HCT116 (cell line): ENCODE measurements at regions of chr6 and their contacts with region 1.

Region 1: DNA sequence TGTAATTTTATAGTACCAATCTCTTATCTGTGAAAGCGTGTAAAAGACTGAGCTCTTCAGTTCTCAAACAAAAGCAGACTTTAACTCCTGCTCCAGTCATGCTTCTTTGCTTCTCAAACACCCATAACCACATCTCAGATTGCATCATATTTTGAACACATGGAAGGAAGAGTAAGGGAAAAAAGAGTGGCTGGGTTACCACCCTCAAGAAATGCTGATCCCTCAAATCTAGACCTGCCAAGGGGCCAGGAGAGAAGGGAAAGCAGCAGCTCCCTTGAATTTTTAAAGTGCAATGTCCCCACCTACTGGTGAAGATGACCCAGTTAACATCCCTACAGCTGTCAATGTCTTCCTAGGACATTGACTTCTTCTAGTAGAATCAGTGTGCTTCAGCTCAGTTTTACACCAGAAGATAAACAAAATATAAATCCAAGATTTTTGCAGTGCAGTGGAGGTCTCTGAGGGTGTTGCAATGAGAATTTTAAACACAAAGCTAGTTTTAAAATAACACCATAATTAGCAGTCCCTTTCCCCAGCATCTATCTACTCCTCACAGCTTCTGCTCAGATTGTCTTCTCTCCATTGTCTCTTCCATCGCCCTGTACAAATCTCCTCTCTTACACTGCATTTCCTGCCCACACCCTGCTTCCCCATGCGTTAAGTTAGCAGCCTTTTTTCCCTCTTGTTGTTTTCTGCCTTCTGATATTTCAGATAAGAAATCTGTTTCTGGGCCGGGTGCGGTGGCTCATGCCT is 22.6 kb upstream of the HLA-DQB2 start:
- DNase-seq: peak; percentile 64
- ATAC-seq: peak; percentile 99
- H3K4me3 ChIP-seq: no peak overlapping the region
- H3K27ac ChIP-seq: no peak overlapping the region
- H3K4me1 ChIP-seq: peaks cover 0 to 8% of the 10 kb centered on the region in 2 experiments; a peak in 2 of 4 replicates
- H3K27me3 ChIP-seq: no peaks in the 10 kb centered on the region
- CTCF ChIP-seq: peak; percentile 65 to 72 (median 69)
- POLR2A ChIP-seq: no peak
- RAD21 ChIP-seq: peak; percentile 87

Region 2: DNA sequence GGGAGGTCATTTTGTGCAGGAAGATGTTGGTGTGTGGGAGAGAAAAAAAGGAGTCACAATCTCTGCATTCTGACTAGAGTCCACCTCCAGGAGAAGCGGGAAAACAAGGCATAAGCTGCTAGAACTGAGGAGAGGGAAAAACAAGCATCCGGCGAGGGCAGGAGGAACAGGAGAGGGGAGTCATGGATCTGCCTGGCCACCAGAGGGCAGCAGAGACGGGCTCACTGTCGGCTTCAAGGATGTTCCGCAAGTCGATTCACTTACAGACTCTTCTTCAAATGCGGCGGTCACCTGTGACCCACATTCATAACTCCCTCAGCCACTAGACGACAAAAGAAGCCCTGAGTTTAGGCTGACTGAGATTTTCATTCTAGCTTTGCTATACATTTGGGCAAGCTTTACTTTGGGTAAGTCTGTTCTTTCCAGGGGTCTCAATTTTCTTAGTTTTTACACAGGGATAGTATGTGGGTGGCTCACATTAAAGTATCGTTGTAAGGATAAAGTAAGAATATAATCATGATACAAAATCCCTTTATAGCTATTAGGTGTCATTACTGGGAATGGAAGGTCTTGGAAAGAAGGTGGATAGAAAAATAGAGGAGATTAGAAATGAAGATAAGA is 372.4 kb before region 1 on chr6:
- CTCF ChIA-PET with region 1: interaction called, 33 read pairs
- POLR2A ChIA-PET with region 1: no interaction called
- RAD21 ChIA-PET with region 1: interaction called in 1 of 2 experiments, 4 read pairs
- intact Hi-C with region 1: loop called (anchors 1 kb)
- DNase-seq: peak; percentile 69
- ATAC-seq: peak; percentile 85
- H3K4me3 ChIP-seq: no peak overlapping the region; a peak in 1 of 4 replicates
- H3K27ac ChIP-seq: no peak overlapping the region
- H3K4me1 ChIP-seq: peaks cover 0 to 12% of the 10 kb centered on the region in 2 experiments; a peak in 2 of 4 replicates
- H3K27me3 ChIP-seq: no peaks in the 10 kb centered on the region
- CTCF ChIP-seq: peak; percentile 73 to 91 (median 88)
- POLR2A ChIP-seq: no peak
- RAD21 ChIP-seq: peak; percentile 89

Region 3: DNA sequence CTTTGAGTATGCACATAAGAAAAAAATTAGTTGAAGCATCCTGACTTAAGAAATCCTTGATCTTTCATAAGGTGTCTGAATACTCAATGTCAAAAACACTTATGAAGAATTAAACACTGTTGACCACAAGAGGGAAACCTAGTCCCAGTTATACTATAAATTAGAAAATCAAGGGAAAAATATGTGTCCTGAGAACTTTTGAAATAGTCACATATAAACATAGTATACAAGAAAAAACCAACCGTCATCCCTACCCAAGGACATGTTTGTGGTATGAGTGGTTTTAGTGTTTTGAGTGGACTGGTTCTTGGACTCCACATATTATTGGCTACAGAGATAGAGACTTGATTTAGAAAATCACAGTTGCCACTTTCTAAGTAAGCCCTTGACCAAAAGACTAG is 353.9 kb before region 1 on chr6:
- CTCF ChIA-PET with region 1: interaction called, 12 read pairs
- POLR2A ChIA-PET with region 1: no interaction called
- RAD21 ChIA-PET with region 1: no interaction called
- intact Hi-C with region 1: loop called (anchors 1 kb)
- DNase-seq: peak; percentile 40
- ATAC-seq: no peak
- H3K4me3 ChIP-seq: no peak overlapping the region
- H3K27ac ChIP-seq: no peak overlapping the region
- H3K4me1 ChIP-seq: no peaks in the 10 kb centered on the region
- H3K27me3 ChIP-seq: no peaks in the 10 kb centered on the region
- CTCF ChIP-seq: peak; percentile 13 to 79 (median 55); a peak in 5 of 6 replicates
- POLR2A ChIP-seq: no peak
- RAD21 ChIP-seq: peak; percentile 83

Region 4: DNA sequence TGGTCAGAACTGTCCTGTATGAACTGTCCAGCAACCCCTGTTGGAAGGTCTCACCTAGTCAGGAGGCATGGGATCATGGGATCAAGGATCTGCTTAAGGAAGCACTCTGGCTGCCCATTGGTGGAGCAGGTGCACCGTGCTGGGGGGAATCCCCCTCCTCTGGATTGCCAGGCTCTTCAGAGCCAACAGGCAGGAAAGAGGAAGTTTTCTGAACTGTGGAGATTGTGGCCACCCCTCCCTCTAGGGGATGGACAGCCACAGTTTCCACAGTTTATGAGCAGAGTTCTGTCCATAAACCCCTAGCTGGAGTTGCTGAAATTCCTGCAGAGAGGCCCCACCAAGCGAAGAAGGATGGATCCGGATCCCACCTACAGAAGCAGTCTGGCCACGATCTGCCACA is 106.5 kb before region 1 on chr6:
- CTCF ChIA-PET with region 1: no interaction called
- POLR2A ChIA-PET with region 1: no interaction called
- RAD21 ChIA-PET with region 1: no interaction called
- intact Hi-C with region 1: no loop called
- DNase-seq: no peak
- ATAC-seq: no peak
- H3K4me3 ChIP-seq: no peak overlapping the region
- H3K27ac ChIP-seq: no peak overlapping the region
- H3K4me1 ChIP-seq: no peaks in the 10 kb centered on the region
- H3K27me3 ChIP-seq: no peaks in the 10 kb centered on the region
- CTCF ChIP-seq: no peak
- POLR2A ChIP-seq: no peak
- RAD21 ChIP-seq: no peak

Region 5: DNA sequence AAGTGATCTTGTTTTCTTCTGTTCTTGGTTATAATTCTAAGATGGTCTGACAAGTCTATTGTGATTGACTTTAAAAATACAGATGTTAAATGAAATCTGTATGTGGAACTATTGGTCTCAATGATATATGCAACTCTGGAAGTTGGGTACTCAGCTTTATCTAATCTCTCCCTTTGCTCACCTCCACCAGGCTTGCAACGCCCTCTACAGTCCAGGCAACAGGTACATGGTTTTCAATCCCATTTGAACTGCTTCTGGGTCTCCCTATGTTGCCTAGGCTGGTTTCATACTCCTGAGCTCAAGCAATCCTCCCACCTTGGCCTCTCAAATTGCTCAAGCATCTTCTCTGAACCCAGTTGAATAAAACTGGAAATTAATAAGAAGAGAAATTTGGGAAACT is 93.9 kb before region 1 on chr6:
- CTCF ChIA-PET with region 1: interaction called, 19 read pairs
- POLR2A ChIA-PET with region 1: no interaction called
- RAD21 ChIA-PET with region 1: interaction called, 3 read pairs
- intact Hi-C with region 1: no loop called
- DNase-seq: peak; percentile 42
- ATAC-seq: peak; percentile 91
- H3K4me3 ChIP-seq: no peak overlapping the region
- H3K27ac ChIP-seq: no peak overlapping the region
- H3K4me1 ChIP-seq: no peaks in the 10 kb centered on the region
- H3K27me3 ChIP-seq: no peaks in the 10 kb centered on the region
- CTCF ChIP-seq: peak; percentile 65 to 80 (median 66); a peak in 5 of 6 replicates
- POLR2A ChIP-seq: no peak
- RAD21 ChIP-seq: peak; percentile 87

Region 6: GRCh38 chr6:32816746-32817204 is 30.8 kb after region 1 on chr6 and contains the start of gene HLA-DOB:
- CTCF ChIA-PET with region 1: no interaction called
- POLR2A ChIA-PET with region 1: no interaction called
- RAD21 ChIA-PET with region 1: no interaction called
- intact Hi-C with region 1: no loop called
- DNase-seq: peak; percentile 40
- ATAC-seq: peak; percentile 80
- H3K4me3 ChIP-seq: no peak within 1 kb of the TSS
- H3K27ac ChIP-seq: no peak within 1 kb of the TSS
- H3K4me1 ChIP-seq: peaks cover 0 to 25% of the 10 kb centered on the region in 2 experiments; a peak in 2 of 4 replicates
- H3K27me3 ChIP-seq: no peaks in the 10 kb centered on the region
- CTCF ChIP-seq: no peak
- POLR2A ChIP-seq: no peak
- RAD21 ChIP-seq: no peak
- total RNA-seq, gene HLA-DOB: 0.64 TPM

Region 7: GRCh38 chr6:33029328-33030184 is 243.6 kb after region 1 on chr6:
- CTCF ChIA-PET with region 1: no interaction called
- POLR2A ChIA-PET with region 1: no interaction called
- RAD21 ChIA-PET with region 1: no interaction called
- intact Hi-C with region 1: no loop called
- DNase-seq: no peak
- ATAC-seq: peak; percentile 32; the same call in 1 of the 2 replicates
- H3K4me3 ChIP-seq: no peak overlapping the region
- H3K27ac ChIP-seq: no peak overlapping the region
- H3K4me1 ChIP-seq: no peaks in the 10 kb centered on the region
- H3K27me3 ChIP-seq: peaks cover 22% of the 10 kb centered on the region
- CTCF ChIP-seq: no peak
- POLR2A ChIP-seq: no peak
- RAD21 ChIP-seq: no peak